ENCODE measurements at regions of chr1 and their contacts with region 1.

Region 1: DNA sequence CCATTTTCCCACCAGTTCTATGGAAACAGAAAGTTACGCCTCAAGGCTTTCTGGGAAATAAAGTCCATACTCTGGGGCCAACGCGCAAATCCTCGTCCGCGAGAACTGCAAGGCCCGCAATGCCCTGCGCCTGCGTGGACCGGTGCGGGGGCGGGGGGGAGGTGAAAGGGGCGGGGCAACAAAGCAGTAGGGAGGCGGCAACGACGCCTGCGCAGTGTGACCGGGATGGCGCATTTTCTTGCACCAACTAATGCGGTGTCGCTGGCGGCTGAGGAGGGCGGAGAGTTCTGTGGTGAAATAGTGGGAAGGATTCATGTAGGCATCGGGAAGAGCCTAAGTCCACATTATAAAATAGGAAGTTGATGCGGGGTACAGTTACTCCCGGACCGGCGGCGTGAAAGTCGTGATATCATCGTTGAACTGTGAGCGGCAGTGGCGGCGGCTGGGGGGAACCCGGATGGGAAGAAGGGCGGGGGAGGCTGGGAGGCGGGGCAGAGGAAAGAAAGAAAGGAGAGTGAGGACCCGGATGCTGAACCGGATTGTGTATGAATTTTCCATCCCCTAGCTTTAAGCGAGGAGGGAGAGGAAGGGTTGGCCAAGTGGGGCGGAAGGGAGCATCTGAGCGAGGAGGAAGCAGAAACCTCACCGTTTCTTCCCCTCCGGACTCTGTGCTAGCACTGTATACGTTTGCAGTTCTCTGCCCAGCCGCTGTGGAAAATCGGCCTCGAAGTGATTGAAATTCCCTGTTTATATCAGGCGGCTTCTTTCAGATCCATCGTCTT is at the start of gene GGPS1:
- DNase-seq: peak; percentile 98
- H3K4me3 ChIP-seq: peak within 1 kb of the TSS; percentile 66 to 100 (median 96)
- H3K27ac ChIP-seq: peak within 1 kb of the TSS; percentile 95 to 100 (median 97)
- H3K4me1 ChIP-seq: peaks cover 31 to 66% (median 48%) of the 10 kb centered on the region in 4 donors
- H3K27me3 ChIP-seq: no peaks in the 10 kb centered on the region
- CTCF ChIP-seq: peak in 2 of 5 experiments; percentile 9 to 47
- EP300 ChIP-seq: no peak
- POLR2A ChIP-seq: peak; percentile 88
- total RNA-seq, gene GGPS1: 11.2 to 22.1 (median 16.9) TPM

Region 2: DNA sequence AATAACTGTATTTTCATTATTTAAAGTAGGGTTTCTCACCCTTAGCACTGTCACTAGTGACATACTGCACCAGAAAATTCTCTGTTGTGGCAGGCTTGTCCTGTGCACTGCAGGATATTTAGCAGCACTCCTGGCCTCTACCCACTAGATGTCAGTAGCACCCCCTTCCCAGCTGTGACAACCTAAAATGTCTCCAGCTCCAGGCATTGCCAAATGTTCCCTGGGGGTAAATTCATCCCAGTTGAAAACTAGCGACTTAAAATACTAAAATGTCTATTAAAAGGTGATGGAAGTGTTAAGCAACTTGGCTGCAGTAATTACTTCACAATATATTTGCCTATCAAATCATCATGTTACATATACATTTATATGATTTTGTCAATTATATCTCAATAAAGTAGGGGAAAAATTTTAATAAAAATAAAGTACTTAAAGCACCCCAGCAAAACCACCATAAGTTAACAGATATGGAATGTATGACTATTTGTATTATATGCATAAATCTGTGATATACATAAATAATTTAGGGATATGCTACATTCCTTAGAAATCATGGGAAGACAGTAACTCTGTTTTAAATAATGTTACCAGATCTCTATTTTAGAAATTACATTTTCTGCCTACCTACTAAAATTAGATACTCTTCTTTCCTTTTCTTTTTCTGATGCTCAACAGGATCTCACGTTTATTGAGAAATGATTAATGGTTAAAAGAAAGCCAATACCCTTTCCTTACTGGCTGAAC is 75.2 kb before region 1 on chr1:
- in situ Hi-C with region 1: no loop called
- intact Hi-C with region 1: loop called (anchors 10 kb)
- DNase-seq: peak; percentile 60
- H3K4me3 ChIP-seq: no peak overlapping the region
- H3K27ac ChIP-seq: no peak overlapping the region
- H3K4me1 ChIP-seq: peaks cover 0 to 12% (median 0%) of the 10 kb centered on the region in 4 donors
- H3K27me3 ChIP-seq: no peaks in the 10 kb centered on the region
- CTCF ChIP-seq: peak; percentile 68 to 80 (median 79)
- EP300 ChIP-seq: no peak
- POLR2A ChIP-seq: no peak

Region 3: DNA sequence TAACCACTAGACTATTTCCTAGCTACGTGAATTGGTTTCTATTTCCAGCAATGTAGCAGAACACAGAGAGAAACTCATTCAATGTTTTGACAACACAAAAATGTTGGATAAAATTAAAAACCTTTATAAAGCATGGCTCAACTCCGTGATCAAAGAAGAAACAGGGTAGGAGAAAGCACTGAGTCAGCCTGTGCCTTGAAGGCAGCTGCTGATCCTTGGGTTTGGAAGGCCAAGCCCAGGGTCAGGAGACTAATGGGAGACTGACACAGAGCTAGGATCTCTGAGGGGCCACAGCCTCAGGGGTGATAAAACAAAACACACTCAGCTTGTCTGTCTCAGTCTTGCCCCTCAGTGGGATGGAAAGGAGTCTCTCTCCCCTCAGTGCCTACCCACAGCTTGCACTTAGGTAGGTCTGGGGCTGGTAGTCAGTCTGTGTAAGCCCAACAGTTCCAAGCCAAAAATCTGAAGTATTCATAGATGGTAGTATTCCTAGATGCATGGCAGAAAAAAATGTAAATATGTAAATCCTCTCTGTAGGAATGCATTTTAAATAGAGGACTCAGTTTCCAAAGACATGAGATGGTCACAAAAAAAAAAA is 122.4 kb after region 1 on chr1:
- in situ Hi-C with region 1: no loop called
- intact Hi-C with region 1: no loop called
- DNase-seq: no peak
- H3K4me3 ChIP-seq: no peak overlapping the region
- H3K27ac ChIP-seq: no peak overlapping the region
- H3K4me1 ChIP-seq: no peaks in the 10 kb centered on the region
- H3K27me3 ChIP-seq: no peaks in the 10 kb centered on the region
- CTCF ChIP-seq: no peak
- EP300 ChIP-seq: no peak
- POLR2A ChIP-seq: no peak

Measured in transverse colon (tissue), 4 donors.